ENCODE measurements at regions of chr11 and their contacts with region 1.

Region 1: GRCh38 chr11:86802601-86803051 is 2.3 kb downstream of the PRSS23 start:
- DNase-seq: peak; percentile 38
- H3K4me3 Mint-ChIP-seq: no peak overlapping the region
- H3K27ac Mint-ChIP-seq: no peak overlapping the region
- H3K4me1 Mint-ChIP-seq: peaks cover 53% of the 10 kb centered on the region
- H3K27me3 Mint-ChIP-seq: peaks cover 46% of the 10 kb centered on the region

Region 2: DNA sequence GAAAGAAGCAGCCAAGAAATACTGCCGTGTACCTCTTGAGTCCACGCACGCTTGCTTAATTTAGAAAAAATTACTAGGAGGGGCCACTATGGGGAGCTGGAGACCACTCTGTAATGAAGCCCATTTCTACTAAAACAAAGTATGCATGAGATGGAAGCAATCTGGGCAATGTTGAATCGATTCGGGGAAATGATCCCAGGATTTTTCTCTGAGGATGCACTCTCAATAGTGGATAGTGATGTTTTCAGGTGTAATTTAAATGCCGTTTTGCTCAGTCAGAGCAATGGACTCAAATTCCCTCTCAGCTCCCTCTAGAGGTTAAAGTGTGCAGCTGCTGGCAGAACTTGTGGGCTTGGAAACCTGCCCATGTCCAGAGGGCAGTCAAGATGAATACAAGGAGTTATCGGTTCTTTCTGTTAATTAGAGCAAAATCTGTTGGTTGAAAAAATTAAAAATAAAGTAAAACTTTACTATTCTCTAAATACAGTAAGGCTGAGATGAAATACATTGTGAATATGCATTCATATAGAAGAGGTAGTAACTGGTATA is 194.3 kb before region 1 on chr11:
- CTCF ChIA-PET with region 1: interaction called, 11 read pairs
- intact Hi-C with region 1: loop called (anchors 5 kb)
- DNase-seq: peak; percentile 70
- H3K4me3 Mint-ChIP-seq: no peak overlapping the region
- H3K27ac Mint-ChIP-seq: no peak overlapping the region
- H3K4me1 Mint-ChIP-seq: peaks cover 29% of the 10 kb centered on the region
- H3K27me3 Mint-ChIP-seq: no peaks in the 10 kb centered on the region

Region 3: GRCh38 chr11:86688398-86689179 is 114.0 kb before region 1 on chr11:
- CTCF ChIA-PET with region 1: no interaction called
- intact Hi-C with region 1: loop called (anchors 1 kb)
- DNase-seq: peak; percentile 70
- H3K4me3 Mint-ChIP-seq: no peak overlapping the region
- H3K27ac Mint-ChIP-seq: peak overlapping the region; percentile 90
- H3K4me1 Mint-ChIP-seq: peaks cover 27% of the 10 kb centered on the region
- H3K27me3 Mint-ChIP-seq: peaks cover 2% of the 10 kb centered on the region

Region 4: GRCh38 chr11:86740709-86741483 is 61.7 kb before region 1 on chr11:
- CTCF ChIA-PET with region 1: no interaction called
- intact Hi-C with region 1: loop called (anchors 1 kb)
- DNase-seq: peak; percentile 26
- H3K4me3 Mint-ChIP-seq: no peak overlapping the region
- H3K27ac Mint-ChIP-seq: no peak overlapping the region
- H3K4me1 Mint-ChIP-seq: peaks cover 11% of the 10 kb centered on the region
- H3K27me3 Mint-ChIP-seq: peaks cover 10% of the 10 kb centered on the region

Region 5: GRCh38 chr11:87252869-87253268 is 450.2 kb after region 1 on chr11:
- CTCF ChIA-PET with region 1: no interaction called
- intact Hi-C with region 1: loop called (anchors 5 kb)
- DNase-seq: no peak
- H3K4me3 Mint-ChIP-seq: no peak overlapping the region
- H3K27ac Mint-ChIP-seq: peak overlapping the region; percentile 14
- H3K4me1 Mint-ChIP-seq: peaks cover 29% of the 10 kb centered on the region
- H3K27me3 Mint-ChIP-seq: no peaks in the 10 kb centered on the region

Measured in activated naive CD4-positive, alpha-beta T cell treated with anti-CD3 and anti-CD28 coated beads for 36 hours (primary cell).